Colonic mucosa (tissue), 4 donors: ENCODE measurements at regions of chr6 and their contacts with region 1.

Region 1: DNA sequence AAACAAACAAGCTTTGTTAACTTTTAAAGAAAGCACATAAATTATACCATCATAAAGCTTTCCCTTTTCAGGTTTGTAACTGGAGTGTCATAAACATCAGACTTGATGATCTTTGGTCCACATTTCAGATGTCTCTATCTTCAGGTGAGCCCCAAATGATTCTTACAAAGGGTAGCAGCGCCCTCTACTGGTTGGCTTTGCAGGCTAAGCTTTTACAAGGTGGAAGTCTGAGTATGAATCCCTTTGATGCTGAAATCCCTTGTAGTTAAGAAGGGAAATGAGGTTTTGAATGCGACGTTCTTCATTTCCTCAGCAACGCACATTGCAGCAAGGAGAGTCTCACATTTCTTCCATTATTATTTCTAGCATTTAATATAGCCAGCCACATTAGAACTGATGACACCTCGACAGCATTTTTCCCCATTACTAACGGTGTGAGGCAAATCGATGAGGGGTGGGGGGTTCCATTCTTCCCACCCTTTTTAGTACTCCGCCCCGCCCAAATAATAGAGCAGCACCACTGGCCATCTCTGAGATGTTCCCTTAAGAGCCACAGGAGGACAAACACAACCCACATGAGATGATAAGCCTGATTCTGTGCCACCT is 126.3 kb upstream of the NT5E start:
- DNase-seq: peak; percentile 83
- H3K4me3 ChIP-seq: no peak overlapping the region
- H3K27ac ChIP-seq: no peak overlapping the region
- H3K4me1 ChIP-seq: no peaks in the 10 kb centered on the region
- H3K27me3 ChIP-seq: no peaks in the 10 kb centered on the region
- CTCF ChIP-seq: peak; percentile 74

Region 2: DNA sequence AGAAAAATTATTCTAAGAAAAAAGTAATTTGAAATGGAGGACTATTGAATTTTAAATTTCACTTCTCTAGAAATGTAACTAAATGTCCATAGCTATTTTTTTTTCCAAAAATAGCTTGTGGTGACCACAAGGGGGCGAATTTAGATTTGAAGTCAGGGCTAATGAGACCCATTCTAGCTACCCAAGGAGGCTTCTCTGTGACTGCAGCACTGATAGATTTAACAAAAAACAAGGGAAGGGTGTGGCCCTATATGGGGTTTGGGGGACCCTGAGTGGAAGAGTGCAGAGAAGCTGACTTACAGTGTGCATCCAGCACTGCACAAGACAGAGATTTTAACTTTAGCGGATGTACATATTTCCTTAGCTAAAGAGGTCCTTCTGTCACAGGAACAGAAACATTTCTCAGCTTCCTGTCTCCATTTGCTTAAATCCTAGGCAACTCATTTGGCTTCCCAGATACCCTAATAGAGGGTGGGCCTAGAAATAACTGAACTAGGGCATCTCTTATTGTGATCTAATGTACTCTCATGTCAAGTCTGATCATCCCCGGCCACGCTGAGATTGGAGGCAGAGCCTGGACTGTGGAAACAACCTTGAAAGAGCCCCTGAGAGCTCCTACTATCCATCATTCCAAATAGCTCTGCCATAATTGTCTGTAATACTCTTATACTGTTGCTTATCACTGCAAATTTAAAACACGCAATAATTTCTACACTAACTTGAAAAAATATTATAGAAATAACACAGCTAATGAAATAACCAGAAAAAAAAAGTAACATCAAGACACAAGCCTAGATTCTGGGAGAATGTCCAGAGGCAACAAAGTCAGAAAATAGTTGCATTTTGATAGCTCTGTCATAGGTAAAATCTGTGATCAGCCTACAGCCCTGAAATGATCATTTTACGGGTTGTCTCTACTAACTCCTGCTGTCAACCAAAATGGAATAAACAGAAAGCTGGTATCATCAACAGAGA is 1708.2 kb before region 1 on chr6:
- intact Hi-C with region 1: loop called (anchors 10 kb)
- DNase-seq: no peak
- H3K4me3 ChIP-seq: no peak overlapping the region
- H3K27ac ChIP-seq: no peak overlapping the region
- H3K4me1 ChIP-seq: no peaks in the 10 kb centered on the region
- H3K27me3 ChIP-seq: no peaks in the 10 kb centered on the region
- CTCF ChIP-seq: no peak

Region 3: DNA sequence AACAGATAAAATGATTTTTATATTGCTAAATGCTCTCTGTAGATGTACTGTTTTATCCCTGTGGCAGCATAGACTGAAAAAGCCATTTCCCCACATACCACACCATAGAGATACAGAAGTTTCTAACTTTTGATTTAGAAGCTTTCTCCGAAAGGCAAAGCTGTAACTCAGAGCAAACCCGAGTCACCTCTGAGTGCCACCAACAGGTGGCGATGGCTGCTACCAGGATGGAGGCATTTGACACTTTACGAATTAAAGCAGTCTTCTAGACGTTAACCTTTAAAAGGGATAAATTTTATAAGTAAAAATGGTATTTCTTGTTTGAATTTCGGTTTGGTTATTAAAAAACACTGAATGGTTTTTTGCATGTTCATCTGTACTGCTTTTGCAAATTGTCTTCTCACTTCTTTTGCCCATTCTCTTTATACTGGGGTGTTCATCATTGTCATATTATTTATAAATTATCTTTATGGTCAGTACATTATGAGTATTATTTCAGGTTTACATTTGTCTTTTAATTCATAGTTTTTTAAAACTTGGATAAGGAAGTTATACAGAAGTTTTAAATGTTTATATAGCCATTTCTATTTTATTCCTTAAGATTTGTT is 895.1 kb before region 1 on chr6:
- intact Hi-C with region 1: loop called (anchors 5 kb)
- DNase-seq: peak; percentile 21
- H3K4me3 ChIP-seq: no peak overlapping the region
- H3K27ac ChIP-seq: no peak overlapping the region
- H3K4me1 ChIP-seq: no peaks in the 10 kb centered on the region
- H3K27me3 ChIP-seq: no peaks in the 10 kb centered on the region
- CTCF ChIP-seq: peak; percentile 45